ENCODE measurements at regions of chr2 and their contacts with region 1.

Region 1: DNA sequence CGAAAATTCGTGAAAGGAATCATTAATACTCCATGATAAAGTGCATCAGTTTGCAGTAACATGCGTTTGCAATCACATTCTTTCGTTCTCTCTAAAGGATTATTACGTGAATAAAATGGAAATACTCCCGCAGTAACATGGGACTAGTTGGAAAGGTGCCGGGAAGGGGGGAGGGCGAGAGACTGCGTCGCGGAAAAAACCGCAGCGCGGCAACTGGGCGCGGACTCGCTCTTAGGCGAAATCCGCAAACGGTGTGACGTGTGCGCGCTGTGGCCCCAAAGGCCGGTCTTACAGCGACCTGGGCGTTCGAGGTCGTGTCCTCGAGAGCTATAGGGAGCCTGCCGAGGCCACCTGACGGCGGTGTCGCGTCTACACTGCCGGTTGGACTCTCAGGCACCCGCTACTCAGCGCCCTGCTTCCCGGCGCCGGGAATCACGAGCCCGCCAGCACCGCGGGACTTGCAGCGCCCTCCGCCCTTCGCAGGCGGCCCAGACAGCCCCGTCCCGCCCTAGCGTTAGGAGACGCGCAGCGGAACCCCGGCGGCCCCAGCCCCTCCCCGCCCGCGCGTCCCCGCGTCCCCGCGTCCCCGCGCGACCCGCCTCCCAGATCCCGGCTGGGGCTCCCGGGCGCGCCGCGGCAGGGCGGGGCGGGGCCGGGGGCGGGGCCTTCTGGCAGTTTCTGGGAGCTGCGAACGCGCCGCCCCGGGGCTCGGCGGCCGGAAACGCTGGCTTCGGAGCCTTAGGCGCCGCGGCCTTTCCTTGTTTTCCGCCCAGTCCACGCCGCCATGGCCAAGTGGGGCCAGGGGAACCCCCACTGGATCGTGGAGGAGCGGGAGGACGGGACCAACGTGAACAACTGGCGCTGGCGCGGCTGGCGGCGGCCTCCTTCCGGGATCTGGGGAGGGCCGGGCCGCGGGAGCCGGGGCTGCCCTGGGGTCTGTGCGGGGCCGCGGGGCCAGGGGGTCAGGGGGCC is 15.1 kb downstream of the C2orf74 start:
- DNase-seq: peak; percentile 86 to 90
- ATAC-seq: peak; percentile 75 to 79
- H3K4me3 ChIP-seq: peak overlapping the region; percentile 62 to 93 (median 84)
- H3K27ac ChIP-seq: peak overlapping the region; percentile 93 to 99 (median 98)
- H3K4me1 ChIP-seq: peaks cover 36 to 40% of the 10 kb centered on the region in 2 donors
- H3K27me3 ChIP-seq: no peaks in the 10 kb centered on the region
- CTCF ChIP-seq: peak in 2 of 5 experiments; percentile 24 to 31
- POLR2A ChIP-seq: peak; percentile 88 to 90

Region 2: DNA sequence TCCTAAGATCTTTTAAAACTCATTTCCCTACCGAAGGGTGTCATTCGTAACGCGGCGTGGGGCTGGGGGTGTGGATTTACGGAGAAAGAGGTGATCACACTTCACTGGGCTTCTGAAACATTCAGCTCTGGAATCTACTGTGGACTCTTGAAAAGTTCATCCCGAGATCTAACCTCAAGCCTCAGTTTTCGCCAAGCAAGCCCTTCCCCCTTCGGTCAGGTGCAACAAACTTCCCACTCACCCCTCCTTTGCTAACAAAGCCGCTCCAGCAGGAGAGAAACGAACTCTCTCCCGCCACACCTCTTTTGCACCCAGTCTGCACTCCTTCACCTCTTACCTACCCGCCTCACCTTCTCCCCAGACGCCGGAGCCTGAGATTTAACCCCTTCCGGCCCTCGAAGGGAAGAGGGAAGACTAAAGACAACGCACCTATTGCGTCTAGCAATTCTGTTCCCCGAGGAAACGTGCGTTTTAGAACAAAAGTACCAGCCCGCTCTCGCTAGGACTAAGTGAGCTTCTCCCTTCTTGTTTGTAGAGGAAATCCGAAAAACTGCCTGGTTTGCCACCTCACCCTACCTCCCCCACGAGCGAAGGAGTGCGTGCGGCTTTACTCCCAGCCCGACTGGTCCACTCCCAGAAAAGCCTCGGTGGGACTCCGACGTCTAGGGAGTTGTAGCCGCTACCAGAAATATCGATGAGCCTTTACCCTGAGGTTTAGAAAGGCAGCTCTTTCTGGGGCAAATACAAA is 160.1 kb before region 1 on chr2:
- in situ Hi-C with region 1: no loop called
- intact Hi-C with region 1: loop called (anchors 2 kb)
- DNase-seq: peak; percentile 70
- ATAC-seq: peak; percentile 90 to 93
- H3K4me3 ChIP-seq: peak overlapping the region; percentile 85 to 94 (median 90)
- H3K27ac ChIP-seq: peak overlapping the region; percentile 94 to 96 (median 95)
- H3K4me1 ChIP-seq: peaks cover 35 to 38% of the 10 kb centered on the region in 2 donors
- H3K27me3 ChIP-seq: no peaks in the 10 kb centered on the region
- CTCF ChIP-seq: no peak
- POLR2A ChIP-seq: peak in 1 of 2 donors; percentile 82

Region 3: DNA sequence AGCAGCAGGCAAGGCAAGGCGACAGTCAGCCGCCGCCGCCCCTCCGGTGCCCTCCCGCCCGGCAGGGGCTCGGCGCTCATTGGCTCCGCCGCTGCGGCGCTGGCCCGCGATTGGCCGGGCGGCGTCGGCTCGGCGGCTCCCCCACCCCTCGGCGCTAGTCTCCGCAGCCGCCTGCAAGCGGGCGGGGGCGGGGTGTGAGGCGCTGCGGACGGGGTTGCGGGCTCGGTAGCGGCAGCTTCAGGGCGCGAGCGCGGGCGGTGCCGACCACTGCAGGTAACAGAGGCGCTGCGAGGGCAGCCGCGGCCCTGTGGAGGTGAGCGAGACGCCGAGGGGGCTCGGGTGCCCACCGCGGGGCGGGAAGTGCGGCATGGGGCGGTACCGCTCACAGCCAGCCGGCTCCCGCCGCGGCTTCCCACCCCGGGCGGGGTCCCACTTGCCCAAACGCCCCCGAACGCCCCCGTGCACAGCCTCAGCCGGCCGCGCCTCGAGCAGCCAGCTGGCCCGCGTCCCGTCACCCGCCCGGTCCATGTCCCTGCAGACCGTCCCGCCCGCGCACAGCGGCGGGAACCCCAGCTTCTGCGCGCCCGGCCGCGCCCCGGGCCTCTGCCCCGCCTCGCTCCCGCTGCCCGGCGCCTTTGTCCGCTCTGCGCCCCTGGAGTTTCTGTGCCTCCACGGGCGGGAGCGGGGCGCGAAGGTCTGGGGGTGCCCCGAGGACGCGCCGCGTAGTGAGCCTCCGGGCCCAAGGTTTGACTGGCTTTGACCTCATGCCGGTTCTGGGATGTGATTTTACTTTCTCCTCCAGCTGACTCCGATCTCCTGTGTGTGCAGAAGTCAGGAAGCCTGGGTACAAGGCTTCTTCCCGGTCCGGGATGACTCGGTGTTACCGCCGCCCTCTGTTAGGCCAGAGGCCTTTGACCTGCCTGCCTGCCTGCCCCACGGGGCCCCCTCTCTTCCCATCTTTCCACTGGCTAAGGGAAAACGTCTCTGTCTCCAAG is 111.0 kb before region 1 on chr2 and contains the start of gene SANBR:
- in situ Hi-C with region 1: no loop called
- intact Hi-C with region 1: loop called (anchors 5 kb)
- DNase-seq: peak; percentile 77 to 87
- ATAC-seq: peak; percentile 93 to 94
- H3K4me3 ChIP-seq: peak within 1 kb of the TSS; percentile 66 to 94 (median 78)
- H3K27ac ChIP-seq: peak within 1 kb of the TSS; percentile 69 to 89 (median 85)
- H3K4me1 ChIP-seq: peaks cover 5 to 16% of the 10 kb centered on the region in 2 donors
- H3K27me3 ChIP-seq: no peaks in the 10 kb centered on the region
- CTCF ChIP-seq: peak in 2 of 5 experiments; percentile 8 to 37
- POLR2A ChIP-seq: peak; percentile 71 to 80
- total RNA-seq, gene SANBR: 1.5 to 6.5 (median 2.1) TPM

Region 4: DNA sequence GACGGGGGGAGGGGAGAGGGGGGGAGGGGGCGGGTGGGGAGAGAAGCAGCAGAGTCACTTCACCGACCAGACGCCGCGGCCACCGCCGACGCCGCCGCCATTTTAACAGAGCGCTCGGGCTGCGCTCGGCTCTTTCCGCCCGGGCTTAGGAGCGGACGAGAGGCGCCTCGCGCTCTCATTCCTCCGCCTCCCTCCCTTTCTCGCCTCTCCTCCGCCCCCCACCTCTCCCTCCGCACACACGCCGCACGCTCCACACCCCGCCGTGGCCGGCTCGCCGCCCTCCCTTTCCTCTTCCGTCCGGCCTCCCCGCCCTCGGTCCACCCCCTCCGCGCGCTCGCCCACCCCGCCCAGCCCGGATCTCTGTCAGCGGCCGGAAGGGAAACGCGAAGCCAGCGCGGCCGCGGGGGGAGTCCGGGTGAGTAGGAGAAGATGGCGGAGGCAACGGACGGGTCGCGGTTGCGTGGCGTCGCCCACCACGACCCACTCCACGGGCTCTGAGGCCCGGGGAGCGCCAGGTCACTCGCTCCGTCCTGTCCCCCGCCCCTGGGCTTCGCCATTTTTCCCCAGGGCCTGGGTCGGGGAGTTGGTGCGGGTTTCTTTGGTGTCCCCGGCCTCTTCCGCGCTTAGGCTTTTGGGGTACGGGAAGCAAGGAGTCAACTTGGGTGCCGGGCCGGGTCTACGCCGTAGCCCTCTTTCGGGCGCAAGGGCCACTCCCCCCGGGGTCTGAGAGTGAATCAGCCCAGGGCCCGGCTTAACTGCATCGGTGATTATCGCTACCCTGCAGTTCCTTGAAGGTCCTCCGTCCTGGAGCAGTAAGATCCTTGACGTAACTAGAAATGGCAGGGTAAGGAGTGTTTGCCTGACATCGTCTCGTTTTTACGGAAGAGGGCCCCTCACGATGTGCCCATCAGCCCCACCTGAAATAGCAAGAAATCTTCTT is 294.2 kb after region 1 on chr2 and contains the start of gene USP34:
- in situ Hi-C with region 1: no loop called
- intact Hi-C with region 1: loop called (anchors 1 kb)
- DNase-seq: peak; percentile 91 to 92
- ATAC-seq: peak; percentile 78 to 81
- H3K4me3 ChIP-seq: peak within 1 kb of the TSS; percentile 78 to 98 (median 86)
- H3K27ac ChIP-seq: peak within 1 kb of the TSS; percentile 95 to 100 (median 98)
- H3K4me1 ChIP-seq: peaks cover 29 to 38% of the 10 kb centered on the region in 2 donors
- H3K27me3 ChIP-seq: no peaks in the 10 kb centered on the region
- CTCF ChIP-seq: peak in 2 of 5 experiments; percentile 12 to 26
- POLR2A ChIP-seq: peak; percentile 86 to 90
- total RNA-seq, gene USP34: 64.5 to 150 (median 76.3) TPM

Region 5: GRCh38 chr2:61854474-61855182 is 677.6 kb after region 1 on chr2:
- in situ Hi-C with region 1: no loop called
- intact Hi-C with region 1: loop called (anchors 2 kb)
- DNase-seq: peak; percentile 90 to 93
- ATAC-seq: peak; percentile 97 to 98
- H3K4me3 ChIP-seq: peak overlapping the region; percentile 80 to 89 (median 82)
- H3K27ac ChIP-seq: peak overlapping the region; percentile 89 to 93 (median 90)
- H3K4me1 ChIP-seq: peaks cover 8 to 13% of the 10 kb centered on the region in 2 donors
- H3K27me3 ChIP-seq: no peaks in the 10 kb centered on the region
- CTCF ChIP-seq: no peak
- POLR2A ChIP-seq: no peak